ENCODE measurements at regions of chr6 and their contacts with region 1.

Region 1: DNA sequence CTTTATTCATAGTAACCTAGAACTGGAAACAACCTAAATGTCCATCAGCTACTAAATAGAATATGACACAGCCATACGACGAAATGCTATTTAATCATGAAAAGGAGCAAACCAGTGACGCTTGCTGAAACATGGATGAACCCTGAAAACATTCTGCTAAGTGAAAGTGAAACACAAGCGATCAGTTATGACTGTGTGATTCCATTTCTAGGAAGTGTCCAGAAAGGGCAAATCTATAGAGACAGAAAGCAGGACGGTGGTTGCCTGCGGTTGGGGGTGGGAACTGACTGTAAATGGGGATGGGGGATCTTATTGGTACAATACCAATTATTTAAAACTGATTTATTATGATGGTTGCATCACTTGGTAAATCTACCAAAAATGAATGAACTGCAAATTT is 126.8 kb downstream of the IPCEF1 start:
- DNase-seq: peak; percentile 89
- H3K4me3 Mint-ChIP-seq: peak overlapping the region; percentile 76
- H3K27ac Mint-ChIP-seq: peak overlapping the region; percentile 65
- H3K4me1 Mint-ChIP-seq: peaks cover 46% of the 10 kb centered on the region
- H3K27me3 Mint-ChIP-seq: no peaks in the 10 kb centered on the region

Region 2: GRCh38 chr6:154267508-154268106 is 37.8 kb after region 1 on chr6:
- intact Hi-C with region 1: loop called (anchors 2 kb)
- DNase-seq: no peak
- H3K4me3 Mint-ChIP-seq: no peak overlapping the region
- H3K27ac Mint-ChIP-seq: peak overlapping the region; percentile 39
- H3K4me1 Mint-ChIP-seq: peaks cover 15% of the 10 kb centered on the region
- H3K27me3 Mint-ChIP-seq: peaks cover 17% of the 10 kb centered on the region

Region 3: DNA sequence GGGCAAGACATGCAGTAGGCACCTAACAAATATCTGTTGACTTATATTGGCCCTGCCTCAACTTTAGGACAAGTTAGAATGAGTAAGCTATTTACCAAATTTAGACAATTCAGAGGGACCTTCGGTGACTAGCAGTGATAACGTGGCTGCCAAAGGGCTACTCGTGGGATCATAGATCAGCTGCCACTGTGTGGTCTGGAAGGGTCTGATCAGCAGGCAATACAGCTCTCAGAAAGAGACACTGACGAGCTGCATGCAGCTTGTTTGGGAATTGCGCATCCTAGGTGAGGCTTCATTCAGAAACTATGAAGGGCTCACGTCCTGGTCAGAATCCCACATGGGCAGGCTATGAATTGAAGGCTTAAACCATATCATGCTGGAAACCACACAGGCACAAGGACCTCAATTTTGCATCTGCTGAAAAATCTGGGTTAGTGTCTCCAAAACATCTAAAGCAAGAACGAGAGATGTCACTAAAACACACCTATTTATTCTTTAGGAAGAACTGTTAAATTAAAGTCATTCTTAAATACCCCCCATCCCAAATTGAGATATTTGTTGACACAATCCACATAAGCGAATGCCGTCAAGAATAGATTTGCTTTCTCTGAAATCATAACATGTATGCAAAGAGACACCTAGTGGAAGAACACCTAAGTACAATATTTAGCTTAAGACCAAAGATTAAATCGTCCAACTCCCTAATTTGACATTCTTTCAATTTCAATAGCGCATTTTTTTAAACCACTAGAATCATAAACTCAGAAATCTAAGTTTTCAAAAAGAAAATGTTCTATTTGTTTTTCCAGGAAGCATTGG is 47.2 kb after region 1 on chr6:
- intact Hi-C with region 1: loop called (anchors 2 kb)
- DNase-seq: peak; percentile 56
- H3K4me3 Mint-ChIP-seq: peak overlapping the region; percentile 54
- H3K27ac Mint-ChIP-seq: peak overlapping the region; percentile 80
- H3K4me1 Mint-ChIP-seq: peaks cover 19% of the 10 kb centered on the region
- H3K27me3 Mint-ChIP-seq: peaks cover 15% of the 10 kb centered on the region

Region 4: DNA sequence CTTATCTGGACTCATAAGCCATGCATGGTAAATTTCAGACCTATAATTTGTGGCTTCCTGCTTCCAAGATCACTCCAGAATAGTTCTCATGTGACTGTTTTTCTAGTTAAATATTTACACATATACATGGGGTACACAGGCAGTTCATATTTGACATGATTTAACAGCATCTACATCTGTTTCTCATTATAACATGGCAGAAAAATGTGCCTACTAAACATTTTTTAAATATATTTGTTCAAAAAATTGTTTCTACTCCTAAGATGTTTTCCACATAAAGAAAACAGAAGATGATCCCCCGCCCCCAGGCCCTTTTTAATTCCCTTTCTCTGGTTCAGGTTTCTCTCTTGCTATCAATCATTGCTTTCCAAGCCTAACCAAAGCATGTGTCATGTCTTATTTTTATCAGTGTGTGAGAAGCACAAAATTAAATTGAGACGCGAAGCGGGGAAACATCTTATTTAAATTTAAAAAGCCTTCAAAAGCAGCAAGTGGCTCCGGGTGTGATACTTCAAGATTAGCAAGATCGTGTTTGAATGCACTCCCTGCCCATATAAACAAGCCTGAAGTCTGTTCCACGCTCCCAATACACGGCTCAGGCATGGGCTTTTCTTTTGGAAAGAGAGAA is 89.6 kb after region 1 on chr6:
- intact Hi-C with region 1: loop called (anchors 5 kb)
- DNase-seq: no peak
- H3K4me3 Mint-ChIP-seq: no peak overlapping the region
- H3K27ac Mint-ChIP-seq: no peak overlapping the region
- H3K4me1 Mint-ChIP-seq: peaks cover 3% of the 10 kb centered on the region
- H3K27me3 Mint-ChIP-seq: no peaks in the 10 kb centered on the region

Measured in activated CD4-positive, alpha-beta T cell treated with anti-CD3 and anti-CD28 coated beads, Interleukin-2, amount 10 ng/mL, durations not matched to agents 24 days and 14 days (primary cell).